T-cell (primary cell): ENCODE measurements at regions of chr6 and their contacts with region 1.

Region 1: DNA sequence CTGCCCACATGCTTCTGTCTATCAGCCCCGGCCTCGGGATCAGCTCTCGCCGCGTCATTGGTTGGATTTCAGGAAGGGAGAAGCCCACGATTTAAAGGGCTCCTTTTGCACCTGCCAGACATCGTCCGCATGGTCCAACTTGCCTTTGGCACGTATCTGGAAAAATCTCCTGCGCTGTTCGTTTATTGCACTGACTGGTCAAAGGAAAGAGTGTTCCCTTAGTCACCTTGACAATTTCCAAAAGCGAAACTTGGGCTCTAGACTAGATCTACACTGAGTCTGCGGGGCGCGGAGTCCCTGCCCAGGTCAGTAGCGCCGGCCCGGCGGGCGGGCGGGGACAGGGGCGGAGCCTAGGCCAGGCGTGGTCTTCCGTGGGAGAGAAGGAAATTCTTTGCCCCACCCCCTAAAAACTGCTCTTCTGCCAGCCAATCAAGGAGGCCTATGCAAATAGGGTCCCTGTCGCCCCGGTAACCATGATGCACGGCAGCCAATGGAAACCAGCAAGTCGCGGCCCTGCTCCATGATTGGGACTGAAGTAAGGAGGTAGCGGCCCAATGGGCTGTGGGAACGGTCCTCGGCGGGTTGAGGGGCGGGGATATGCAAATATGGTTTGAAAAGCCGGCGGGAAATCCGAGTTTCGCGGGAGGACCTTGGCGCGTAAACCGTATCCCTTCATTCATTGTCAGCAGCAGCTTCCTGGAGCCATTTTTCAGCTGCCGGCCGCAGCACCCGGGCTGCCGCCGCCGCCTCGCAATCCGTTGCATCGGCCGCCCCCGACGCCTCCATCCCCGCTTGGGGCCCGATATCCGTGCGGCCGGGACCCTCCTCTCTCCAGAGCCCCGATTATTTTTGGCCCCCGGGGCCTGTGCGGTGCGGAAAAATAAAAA is at the start of gene E2F3:
- DNase-seq: peak; percentile 96 to 100 (median 99)
- ATAC-seq: peak; percentile 84 to 87 (median 86)
- H3K4me3 ChIP-seq: peak within 1 kb of the TSS; percentile 67 to 92
- H3K4me3 Mint-ChIP-seq: peak within 1 kb of the TSS; percentile 96 to 100 (median 98)
- H3K27ac ChIP-seq: peak within 1 kb of the TSS; percentile 21
- H3K27ac Mint-ChIP-seq: peak within 1 kb of the TSS; percentile 81 to 84
- H3K4me1 ChIP-seq: peaks cover 19 to 26% of the 10 kb centered on the region in 2 experiments
- H3K4me1 Mint-ChIP-seq: peaks cover 34 to 37% (median 35%) of the 10 kb centered on the region in 3 donors
- H3K27me3 ChIP-seq: no peaks in the 10 kb centered on the region
- H3K27me3 Mint-ChIP-seq: no peaks in the 10 kb centered on the region
- total RNA-seq, gene E2F3: 9.6 to 28.2 (median 23.1) TPM

Region 2: DNA sequence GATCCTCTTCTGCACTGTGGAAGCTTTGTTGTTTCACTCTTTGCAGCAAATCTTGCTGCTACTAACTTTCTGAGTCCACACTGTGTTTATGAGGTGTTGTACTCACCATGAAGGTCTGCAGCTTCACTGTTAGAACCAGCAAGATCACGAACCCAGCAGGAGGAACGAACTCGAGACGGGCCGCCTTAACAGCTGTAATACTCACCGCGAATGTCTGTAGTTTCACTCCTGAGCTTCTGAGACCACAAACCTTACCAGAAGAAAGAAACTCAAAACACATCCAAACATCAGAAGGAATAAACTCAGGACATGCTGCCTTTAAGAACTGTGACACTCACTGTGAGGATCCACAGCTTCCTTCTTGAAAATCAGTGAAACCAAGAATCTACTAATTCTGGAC is 141.1 kb before region 1 on chr6:
- CTCF ChIA-PET with region 1: no interaction called
- POLR2A ChIA-PET with region 1: no interaction called
- DNase-seq: no peak
- ATAC-seq: no peak
- H3K4me3 ChIP-seq: no peak overlapping the region
- H3K4me3 Mint-ChIP-seq: no peak overlapping the region
- H3K27ac ChIP-seq: no peak overlapping the region
- H3K27ac Mint-ChIP-seq: no peak overlapping the region
- H3K4me1 ChIP-seq: no peaks in the 10 kb centered on the region
- H3K4me1 Mint-ChIP-seq: no peaks in the 10 kb centered on the region
- H3K27me3 ChIP-seq: peaks cover 0 to 5% of the 10 kb centered on the region in 2 experiments
- H3K27me3 Mint-ChIP-seq: peaks cover 0 to 6% of the 10 kb centered on the region in 2 donors

Region 3: DNA sequence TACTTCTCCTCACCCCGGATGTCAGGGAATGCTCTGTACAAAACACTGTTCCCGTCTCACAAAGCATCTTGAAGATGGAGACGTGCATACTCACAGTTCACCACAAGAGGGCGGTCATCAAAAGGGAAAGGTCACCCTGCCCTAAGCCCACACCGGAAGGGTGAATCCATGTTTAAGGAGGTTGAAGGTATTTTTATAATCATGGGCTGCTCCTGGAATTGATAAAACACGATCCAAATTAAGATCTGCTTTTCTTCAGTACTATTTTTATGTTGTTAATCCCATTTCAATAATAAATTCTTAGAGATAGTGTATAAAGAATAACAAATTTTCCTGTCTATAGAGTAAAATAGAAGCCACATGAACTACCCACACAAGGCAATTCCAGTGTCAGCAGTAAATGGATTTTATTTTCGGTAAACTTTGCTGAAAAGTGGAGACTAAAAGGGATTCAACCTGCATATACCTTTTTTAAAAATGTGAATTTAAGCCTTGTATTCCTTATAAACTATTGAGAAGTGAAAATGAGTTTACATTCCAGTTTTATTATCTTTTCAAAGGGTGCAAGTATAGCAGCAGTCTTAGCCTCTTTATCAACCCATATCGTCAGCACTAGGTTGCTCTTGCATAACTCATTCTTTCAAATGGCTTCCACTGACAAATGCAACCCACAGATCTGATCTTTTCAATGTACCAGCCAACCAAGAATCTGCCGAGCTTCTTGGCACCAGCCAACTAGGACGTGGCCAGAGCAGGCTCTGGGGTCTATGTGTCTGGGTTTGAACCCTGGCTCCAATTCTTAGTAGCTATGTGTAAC is 109.5 kb before region 1 on chr6:
- CTCF ChIA-PET with region 1: interaction called, 4 to 6 read pairs
- POLR2A ChIA-PET with region 1: interaction called in 1 of 2 experiments, 13 read pairs
- DNase-seq: peak; percentile 19 to 88 (median 61)
- ATAC-seq: peak; percentile 79 to 87 (median 86)
- H3K4me3 ChIP-seq: no peak overlapping the region
- H3K4me3 Mint-ChIP-seq: peak overlapping the region in 1 of 3 donors; percentile 17
- H3K27ac ChIP-seq: no peak overlapping the region
- H3K27ac Mint-ChIP-seq: peak overlapping the region; percentile 66 to 71
- H3K4me1 ChIP-seq: peaks cover 10 to 16% of the 10 kb centered on the region in 2 experiments
- H3K4me1 Mint-ChIP-seq: peaks cover 20 to 26% (median 22%) of the 10 kb centered on the region in 3 donors
- H3K27me3 ChIP-seq: no peaks in the 10 kb centered on the region
- H3K27me3 Mint-ChIP-seq: no peaks in the 10 kb centered on the region

Region 4: DNA sequence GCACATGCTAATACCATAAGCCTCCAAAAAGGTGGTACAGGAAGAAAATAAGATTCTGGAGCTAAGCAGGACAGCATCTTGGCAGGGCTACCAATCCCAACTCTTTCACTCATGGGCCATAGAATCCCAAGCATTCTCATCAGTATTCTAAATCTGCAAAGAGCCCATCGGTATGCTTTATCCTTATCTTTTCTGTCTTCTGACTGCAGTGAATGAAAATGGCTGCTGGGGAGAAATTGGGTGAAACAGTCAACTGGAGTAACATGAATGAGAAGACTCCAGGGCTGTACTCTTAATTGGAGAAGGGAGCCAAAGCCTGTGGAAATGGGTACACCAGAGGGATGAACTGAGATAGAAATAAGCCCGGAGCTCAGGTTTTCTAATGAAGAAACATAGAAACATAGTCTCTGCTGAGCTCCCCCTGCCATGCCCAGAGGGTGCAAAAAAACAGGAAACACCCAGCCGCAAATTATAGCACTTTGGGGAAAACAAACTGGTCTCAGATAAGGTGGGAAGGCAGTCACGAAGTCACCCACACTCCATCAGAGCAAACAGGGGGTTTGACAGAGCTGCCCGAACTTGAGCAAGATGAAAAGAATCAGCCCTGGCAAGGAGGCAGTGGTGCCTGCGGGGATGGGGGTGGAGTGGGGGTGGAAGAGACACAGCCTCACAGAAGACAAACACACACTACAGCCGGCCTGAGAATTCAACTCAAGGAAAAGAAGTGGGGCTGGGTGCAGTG is 35.2 kb before region 1 on chr6:
- CTCF ChIA-PET with region 1: interaction called, 6 to 10 read pairs
- POLR2A ChIA-PET with region 1: interaction called in 1 of 2 experiments, 4 read pairs
- DNase-seq: peak; percentile 24 to 81 (median 49)
- ATAC-seq: peak; percentile 86 to 94 (median 92)
- H3K4me3 ChIP-seq: peak overlapping the region; percentile 3 to 23
- H3K4me3 Mint-ChIP-seq: peak overlapping the region; percentile 73 to 81 (median 75)
- H3K27ac ChIP-seq: peak overlapping the region; percentile 84
- H3K27ac Mint-ChIP-seq: peak overlapping the region; percentile 99 to 100
- H3K4me1 ChIP-seq: peaks cover 42 to 58% of the 10 kb centered on the region in 2 experiments
- H3K4me1 Mint-ChIP-seq: peaks cover 63 to 71% (median 63%) of the 10 kb centered on the region in 3 donors
- H3K27me3 ChIP-seq: no peaks in the 10 kb centered on the region
- H3K27me3 Mint-ChIP-seq: no peaks in the 10 kb centered on the region

Region 5: DNA sequence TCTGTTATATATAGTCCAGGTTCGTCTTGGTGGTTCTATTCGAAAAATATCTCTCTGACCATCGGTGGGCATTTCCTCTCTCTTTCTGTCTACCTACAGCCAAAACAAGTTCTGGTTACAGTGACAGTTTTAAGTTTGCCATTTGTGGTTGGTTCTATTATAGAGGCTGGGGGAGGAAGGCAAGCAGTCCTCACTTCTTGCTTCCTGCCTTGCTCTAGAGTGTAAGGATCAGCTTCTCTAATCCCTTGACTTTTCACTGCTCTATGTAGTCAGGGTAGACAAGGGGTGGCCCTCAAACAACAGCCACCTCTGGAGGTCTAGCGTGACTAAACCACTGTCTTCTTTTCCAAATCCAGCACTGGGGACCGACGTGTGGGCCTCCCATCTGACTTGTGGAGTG is 16.4 kb after region 1 on chr6:
- CTCF ChIA-PET with region 1: interaction called in 1 of 2 experiments, 12 read pairs
- POLR2A ChIA-PET with region 1: no interaction called
- DNase-seq: no peak
- ATAC-seq: no peak
- H3K4me3 ChIP-seq: no peak overlapping the region
- H3K4me3 Mint-ChIP-seq: no peak overlapping the region
- H3K27ac ChIP-seq: no peak overlapping the region
- H3K27ac Mint-ChIP-seq: no peak overlapping the region
- H3K4me1 ChIP-seq: peaks cover 14 to 30% of the 10 kb centered on the region in 2 experiments
- H3K4me1 Mint-ChIP-seq: peaks cover 42 to 66% (median 52%) of the 10 kb centered on the region in 3 donors
- H3K27me3 ChIP-seq: no peaks in the 10 kb centered on the region
- H3K27me3 Mint-ChIP-seq: no peaks in the 10 kb centered on the region

Region 6: DNA sequence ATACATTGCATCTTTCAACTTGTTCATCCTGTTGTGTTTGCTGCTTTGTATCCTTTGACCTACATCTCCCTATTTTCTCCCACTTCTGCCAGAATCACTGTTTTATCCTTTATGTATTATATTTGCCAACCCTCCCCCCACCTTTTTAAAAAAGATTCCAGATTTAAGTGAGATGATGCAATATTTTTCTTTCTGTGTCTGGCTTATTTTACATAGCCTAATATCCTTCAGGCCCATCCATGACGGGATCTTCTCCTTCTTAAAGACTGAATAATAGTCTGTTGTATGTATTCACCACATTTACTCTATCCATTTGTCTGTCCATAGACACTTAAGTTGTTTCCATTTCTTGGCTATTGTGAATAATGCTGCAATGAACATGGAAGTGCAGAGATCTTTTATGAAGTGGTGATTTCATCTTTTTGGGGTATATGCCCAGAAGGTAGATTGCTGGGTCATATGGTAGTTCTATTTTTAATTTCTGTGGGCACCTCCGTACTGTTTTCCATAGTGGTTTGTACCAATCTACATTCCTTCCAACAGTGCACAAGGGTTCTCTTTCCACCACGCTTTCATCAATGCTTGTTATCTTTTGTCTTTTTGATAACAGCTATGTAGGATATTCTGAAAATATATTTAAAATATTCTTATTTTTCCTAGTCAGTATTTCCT is 313.8 kb after region 1 on chr6:
- CTCF ChIA-PET with region 1: no interaction called
- POLR2A ChIA-PET with region 1: no interaction called
- DNase-seq: no peak
- ATAC-seq: no peak
- H3K4me3 ChIP-seq: no peak overlapping the region
- H3K4me3 Mint-ChIP-seq: no peak overlapping the region
- H3K27ac ChIP-seq: no peak overlapping the region
- H3K27ac Mint-ChIP-seq: no peak overlapping the region
- H3K4me1 ChIP-seq: peaks cover 0 to 14% of the 10 kb centered on the region in 2 experiments
- H3K4me1 Mint-ChIP-seq: peaks cover 24 to 33% (median 29%) of the 10 kb centered on the region in 3 donors
- H3K27me3 ChIP-seq: no peaks in the 10 kb centered on the region
- H3K27me3 Mint-ChIP-seq: no peaks in the 10 kb centered on the region